Activated naive CD4-positive, alpha-beta T cell treated with anti-CD3 and anti-CD28 coated beads for 36 hours (primary cell): ENCODE measurements at regions of chr22 and their contacts with region 1.

Region 1: GRCh38 chr22:39520054-39520891 is at the start of gene ATF4:
- DNase-seq: peak; percentile 98
- H3K4me3 Mint-ChIP-seq: peak within 1 kb of the TSS; percentile 83
- H3K27ac Mint-ChIP-seq: peak within 1 kb of the TSS; percentile 95
- H3K4me1 Mint-ChIP-seq: peaks cover 64% of the 10 kb centered on the region
- H3K27me3 Mint-ChIP-seq: peaks cover 2% of the 10 kb centered on the region
- total RNA-seq, gene ATF4: 589 to 609 TPM

Region 2: GRCh38 chr22:39343259-39344048 is 176.8 kb before region 1 on chr22:
- CTCF ChIA-PET with region 1: no interaction called
- intact Hi-C with region 1: loop called (anchors 2 kb)
- DNase-seq: peak; percentile 75
- H3K4me3 Mint-ChIP-seq: no peak overlapping the region
- H3K27ac Mint-ChIP-seq: no peak overlapping the region
- H3K4me1 Mint-ChIP-seq: no peaks in the 10 kb centered on the region
- H3K27me3 Mint-ChIP-seq: no peaks in the 10 kb centered on the region

Region 3: GRCh38 chr22:39388261-39389011 is 131.8 kb before region 1 on chr22:
- CTCF ChIA-PET with region 1: no interaction called
- intact Hi-C with region 1: loop called (anchors 2 kb)
- DNase-seq: peak; percentile 92
- H3K4me3 Mint-ChIP-seq: peak overlapping the region; percentile 75
- H3K27ac Mint-ChIP-seq: peak overlapping the region; percentile 63
- H3K4me1 Mint-ChIP-seq: peaks cover 15% of the 10 kb centered on the region
- H3K27me3 Mint-ChIP-seq: no peaks in the 10 kb centered on the region

Region 4: DNA sequence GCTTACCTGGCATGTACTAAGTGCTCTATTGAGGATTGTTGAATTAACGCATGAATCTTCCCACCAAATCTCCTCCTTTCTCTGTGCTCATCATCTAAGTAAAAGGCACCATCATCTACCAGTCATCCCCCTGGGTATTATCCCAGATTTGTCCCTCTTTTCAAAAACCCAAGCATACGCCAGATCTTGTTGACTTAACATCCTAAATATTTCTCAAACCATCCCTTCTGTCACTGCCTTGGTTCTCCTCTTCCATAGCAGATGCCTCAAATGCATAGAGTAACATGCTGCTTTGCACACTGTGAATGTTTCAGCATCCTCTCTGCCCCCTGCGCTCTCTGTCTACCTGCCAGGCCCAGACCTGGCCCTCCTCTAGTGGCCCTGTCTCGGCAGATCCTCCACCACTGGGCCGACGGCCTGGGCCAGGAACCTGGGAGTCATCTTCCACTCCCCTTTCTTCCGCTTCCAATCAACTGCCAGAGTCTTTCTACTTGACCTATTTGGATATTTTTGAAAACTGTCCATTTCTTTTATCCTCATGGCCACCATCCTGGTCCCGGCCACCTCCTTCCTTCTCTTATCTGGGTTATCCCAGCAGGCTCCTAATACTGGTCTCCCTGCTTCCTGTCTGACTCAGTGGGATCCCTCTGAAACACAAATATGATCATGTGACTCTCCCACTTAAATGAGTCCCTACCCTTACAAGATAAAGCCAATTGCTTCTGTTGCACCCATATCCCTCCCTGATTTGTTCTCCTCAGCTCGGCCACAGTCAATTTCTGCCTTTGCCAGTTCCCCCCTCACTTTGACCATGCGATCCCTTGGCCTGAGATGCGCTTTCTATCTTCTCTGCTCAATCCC is 124.1 kb before region 1 on chr22:
- CTCF ChIA-PET with region 1: interaction called, 10 read pairs
- intact Hi-C with region 1: loop called (anchors 1 kb)
- DNase-seq: no peak
- H3K4me3 Mint-ChIP-seq: no peak overlapping the region
- H3K27ac Mint-ChIP-seq: no peak overlapping the region
- H3K4me1 Mint-ChIP-seq: peaks cover 7% of the 10 kb centered on the region
- H3K27me3 Mint-ChIP-seq: no peaks in the 10 kb centered on the region

Region 5: DNA sequence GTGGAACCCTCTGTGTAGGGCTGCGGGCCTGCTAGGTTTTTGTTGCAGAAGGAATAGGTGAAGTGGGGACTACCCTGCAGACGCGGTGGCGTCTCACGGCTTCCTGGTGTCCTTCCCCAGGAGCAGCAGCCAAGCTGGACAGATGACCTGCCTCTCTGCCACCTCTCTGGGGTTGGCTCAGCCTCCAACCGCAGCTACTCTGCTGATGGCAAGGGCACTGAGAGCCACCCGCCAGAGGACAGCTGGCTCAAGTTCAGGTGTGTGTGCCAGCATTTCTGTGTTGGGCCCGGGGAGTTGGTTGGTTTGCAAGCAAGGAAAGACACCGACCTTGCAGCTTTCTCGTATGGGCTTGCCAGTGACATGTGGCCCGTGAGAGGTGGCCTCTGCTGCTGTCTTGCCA is 105.4 kb before region 1 on chr22:
- CTCF ChIA-PET with region 1: no interaction called
- intact Hi-C with region 1: loop called (anchors 1 kb)
- DNase-seq: no peak
- H3K4me3 Mint-ChIP-seq: no peak overlapping the region
- H3K27ac Mint-ChIP-seq: no peak overlapping the region
- H3K4me1 Mint-ChIP-seq: peaks cover 64% of the 10 kb centered on the region
- H3K27me3 Mint-ChIP-seq: no peaks in the 10 kb centered on the region

Region 6: GRCh38 chr22:39502109-39502788 is 18.0 kb before region 1 on chr22 and contains the start of gene MIEF1:
- CTCF ChIA-PET with region 1: interaction called, 208 read pairs
- intact Hi-C with region 1: loop called (anchors 1 kb)
- DNase-seq: peak; percentile 96
- H3K4me3 Mint-ChIP-seq: peak within 1 kb of the TSS; percentile 96
- H3K27ac Mint-ChIP-seq: peak within 1 kb of the TSS; percentile 91
- H3K4me1 Mint-ChIP-seq: peaks cover 34% of the 10 kb centered on the region
- H3K27me3 Mint-ChIP-seq: no peaks in the 10 kb centered on the region
- total RNA-seq, gene MIEF1: 33.3 to 35.1 TPM